CD8-positive, alpha-beta T cell (primary cell): ENCODE measurements at regions of chr1 and their contacts with region 1.

Region 1: DNA sequence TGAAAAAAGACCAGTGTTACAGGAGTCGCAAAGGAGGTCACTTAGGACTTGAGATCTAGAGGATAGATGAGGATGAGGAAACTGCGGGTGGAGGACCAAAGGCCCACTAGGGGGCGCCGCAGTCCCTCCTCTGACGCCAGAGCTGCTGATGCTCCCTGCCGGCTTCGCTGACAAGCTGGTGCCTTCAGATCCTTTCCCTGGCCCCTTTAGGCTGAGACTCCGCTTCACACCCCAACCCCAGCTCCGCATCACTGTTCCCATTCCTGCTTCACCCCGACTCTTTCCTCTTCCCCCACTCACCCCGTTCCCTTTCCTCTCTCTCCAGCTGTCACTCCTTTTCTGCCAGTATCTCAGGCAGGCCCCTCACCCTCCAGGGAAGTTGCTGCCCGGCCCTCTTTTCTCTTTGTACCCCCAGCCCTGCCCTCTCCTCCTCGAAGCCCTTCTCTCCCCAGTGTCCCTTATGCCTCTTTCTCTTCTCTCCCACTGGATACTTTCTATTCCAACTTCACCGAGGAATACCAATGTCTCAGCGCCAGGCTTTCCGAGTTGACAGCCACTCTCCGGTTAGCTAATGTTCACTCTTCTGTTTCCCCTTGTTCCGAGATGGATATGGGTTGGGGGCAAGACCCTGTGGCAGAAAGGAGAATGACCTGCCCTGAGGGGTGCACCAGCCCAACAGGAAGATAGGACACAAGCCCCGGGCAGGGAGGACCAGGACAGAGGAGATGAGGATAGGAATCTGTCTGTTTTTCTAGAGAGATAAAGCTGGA is 4.5 kb downstream of the KCNJ9 start:
- DNase-seq: peak; percentile 58 to 86 (median 81)
- ATAC-seq: peak; percentile 74
- H3K4me3 ChIP-seq: no peak overlapping the region
- H3K4me3 Mint-ChIP-seq: peak overlapping the region; percentile 32
- H3K27ac ChIP-seq: no peak overlapping the region
- H3K27ac Mint-ChIP-seq: peak overlapping the region; percentile 46
- H3K4me1 ChIP-seq: peaks cover 10% of the 10 kb centered on the region
- H3K4me1 Mint-ChIP-seq: peaks cover 20% of the 10 kb centered on the region
- H3K27me3 ChIP-seq: peaks cover 5 to 13% of the 10 kb centered on the region in 2 experiments
- H3K27me3 Mint-ChIP-seq: peaks cover 15% of the 10 kb centered on the region
- CTCF ChIP-seq: peak; percentile 81

Region 2: GRCh38 chr1:159161001-159161718 is 924.7 kb before region 1 on chr1:
- CTCF ChIA-PET with region 1: no interaction called
- POLR2A ChIA-PET with region 1: no interaction called
- intact Hi-C with region 1: loop called in 1 of 2 experiments (anchors 10 kb)
- DNase-seq: peak; percentile 28 to 75 (median 63)
- ATAC-seq: peak; percentile 75
- H3K4me3 ChIP-seq: no peak overlapping the region
- H3K4me3 Mint-ChIP-seq: no peak overlapping the region
- H3K27ac ChIP-seq: no peak overlapping the region
- H3K27ac Mint-ChIP-seq: no peak overlapping the region
- H3K4me1 ChIP-seq: no peaks in the 10 kb centered on the region
- H3K4me1 Mint-ChIP-seq: peaks cover 2% of the 10 kb centered on the region
- H3K27me3 ChIP-seq: peaks cover 0 to 4% of the 10 kb centered on the region in 2 experiments
- H3K27me3 Mint-ChIP-seq: peaks cover 47% of the 10 kb centered on the region
- CTCF ChIP-seq: peak; percentile 79

Region 3: GRCh38 chr1:160031365-160032164 is 54.3 kb before region 1 on chr1 and contains the start of gene PIGM:
- CTCF ChIA-PET with region 1: interaction called, 11 read pairs
- POLR2A ChIA-PET with region 1: no interaction called
- intact Hi-C with region 1: no loop called
- DNase-seq: peak; percentile 78 to 96 (median 94)
- ATAC-seq: peak; percentile 98
- H3K4me3 ChIP-seq: peak within 1 kb of the TSS; percentile 68 to 90
- H3K4me3 Mint-ChIP-seq: peak within 1 kb of the TSS; percentile 98
- H3K27ac ChIP-seq: peak within 1 kb of the TSS; percentile 58
- H3K27ac Mint-ChIP-seq: peak within 1 kb of the TSS; percentile 93
- H3K4me1 ChIP-seq: peaks cover 23% of the 10 kb centered on the region
- H3K4me1 Mint-ChIP-seq: peaks cover 40% of the 10 kb centered on the region
- H3K27me3 ChIP-seq: no peaks in the 10 kb centered on the region
- H3K27me3 Mint-ChIP-seq: no peaks in the 10 kb centered on the region
- CTCF ChIP-seq: no peak
- total RNA-seq, gene PIGM: 1.4 to 1.6 TPM

Region 4: GRCh38 chr1:160058087-160058486 is 27.8 kb before region 1 on chr1:
- CTCF ChIA-PET with region 1: interaction called, 320 read pairs
- POLR2A ChIA-PET with region 1: no interaction called
- intact Hi-C with region 1: no loop called
- DNase-seq: no peak
- ATAC-seq: no peak
- H3K4me3 ChIP-seq: no peak overlapping the region
- H3K4me3 Mint-ChIP-seq: no peak overlapping the region
- H3K27ac ChIP-seq: no peak overlapping the region
- H3K27ac Mint-ChIP-seq: no peak overlapping the region
- H3K4me1 ChIP-seq: no peaks in the 10 kb centered on the region
- H3K4me1 Mint-ChIP-seq: no peaks in the 10 kb centered on the region
- H3K27me3 ChIP-seq: no peaks in the 10 kb centered on the region
- H3K27me3 Mint-ChIP-seq: peaks cover 31% of the 10 kb centered on the region
- CTCF ChIP-seq: no peak

Region 5: GRCh38 chr1:160108888-160109662 is 23.2 kb after region 1 on chr1:
- CTCF ChIA-PET with region 1: interaction called, 24 read pairs
- POLR2A ChIA-PET with region 1: no interaction called
- intact Hi-C with region 1: no loop called
- DNase-seq: peak in 4 of 9 experiments; percentile 29 to 63 (median 53)
- ATAC-seq: peak; percentile 74
- H3K4me3 ChIP-seq: no peak overlapping the region
- H3K4me3 Mint-ChIP-seq: no peak overlapping the region
- H3K27ac ChIP-seq: no peak overlapping the region
- H3K27ac Mint-ChIP-seq: no peak overlapping the region
- H3K4me1 ChIP-seq: no peaks in the 10 kb centered on the region
- H3K4me1 Mint-ChIP-seq: no peaks in the 10 kb centered on the region
- H3K27me3 ChIP-seq: no peaks in the 10 kb centered on the region
- H3K27me3 Mint-ChIP-seq: peaks cover 8% of the 10 kb centered on the region
- CTCF ChIP-seq: peak; percentile 35

Region 6: DNA sequence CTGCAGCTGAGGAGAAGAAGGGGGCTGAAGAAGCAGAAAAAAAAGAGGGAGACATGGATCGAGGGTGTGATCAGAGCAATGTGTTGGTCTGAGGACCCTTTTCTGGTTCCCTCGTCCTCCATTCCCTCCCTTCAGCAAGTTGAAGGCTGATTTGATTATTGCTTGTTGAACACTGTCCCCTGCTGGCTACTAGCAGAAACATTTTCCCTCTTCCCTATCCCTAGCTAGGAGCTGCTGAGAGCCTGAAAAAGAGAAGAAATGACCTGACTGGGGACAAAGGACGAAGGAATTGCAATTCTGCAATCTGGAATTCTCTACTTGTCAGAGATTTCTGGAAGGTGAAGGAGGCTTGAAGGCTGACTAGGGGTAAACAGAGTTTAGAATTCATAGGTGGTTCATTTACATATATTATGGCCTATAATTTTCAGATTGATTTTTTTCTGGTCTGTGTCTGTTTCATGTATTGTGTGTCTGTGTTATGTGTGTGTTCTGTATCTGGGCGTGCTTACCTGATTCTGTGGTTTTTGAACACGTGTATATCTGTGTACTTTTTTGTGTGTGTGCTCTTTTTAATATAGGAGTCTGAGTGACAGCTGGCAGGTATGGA is 290.8 kb after region 1 on chr1:
- CTCF ChIA-PET with region 1: interaction called, 11 read pairs
- POLR2A ChIA-PET with region 1: no interaction called
- intact Hi-C with region 1: no loop called
- DNase-seq: peak in 5 of 9 experiments; percentile 13 to 75 (median 53)
- ATAC-seq: peak; percentile 61
- H3K4me3 ChIP-seq: no peak overlapping the region
- H3K4me3 Mint-ChIP-seq: no peak overlapping the region
- H3K27ac ChIP-seq: no peak overlapping the region
- H3K27ac Mint-ChIP-seq: no peak overlapping the region
- H3K4me1 ChIP-seq: peaks cover 12% of the 10 kb centered on the region
- H3K4me1 Mint-ChIP-seq: peaks cover 15% of the 10 kb centered on the region
- H3K27me3 ChIP-seq: no peaks in the 10 kb centered on the region
- H3K27me3 Mint-ChIP-seq: no peaks in the 10 kb centered on the region
- CTCF ChIP-seq: peak; percentile 65